Activated T-helper 1 cell treated with anti-CD3 and anti-CD28 coated beads, Interleukin-12 subunit alpha, Interleukin-12 subunit beta, Interleukin-2, Interleukin-4 antibody, amounts not matched to agents 30 ng/mL and 10 ng/mL and 1 ng/mL, durations not matched to agents 14 hours and 24 hours and 36 hours (primary cell): ENCODE measurements at regions of chrX and their contacts with region 1.

Region 1: DNA sequence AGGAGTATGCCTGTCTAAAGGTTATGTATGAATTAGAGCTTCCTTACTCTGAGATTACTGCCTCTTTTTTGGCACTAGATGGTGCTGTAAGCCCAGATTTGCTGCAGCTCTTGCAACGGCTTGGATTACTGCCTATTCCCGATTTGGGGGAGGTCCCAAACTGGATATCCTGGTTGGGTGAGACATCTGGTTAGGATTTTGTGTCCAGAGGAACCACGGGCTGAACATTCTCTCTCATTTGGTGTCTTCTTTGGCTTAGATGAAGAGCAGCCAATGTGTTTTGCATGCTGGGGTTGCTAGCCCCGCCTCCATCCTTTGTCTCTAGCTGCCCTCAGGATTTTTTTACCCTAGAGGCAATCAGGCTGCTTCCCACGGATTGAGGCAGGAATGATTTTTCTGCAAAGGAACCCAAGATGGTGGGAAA is 31.9 kb downstream of the F8A1 start:
- DNase-seq: peak; percentile 1
- H3K4me3 Mint-ChIP-seq: peak overlapping the region; percentile 68
- H3K27ac Mint-ChIP-seq: no peak overlapping the region
- H3K4me1 Mint-ChIP-seq: peaks cover 6% of the 10 kb centered on the region
- H3K27me3 Mint-ChIP-seq: peaks cover 15% of the 10 kb centered on the region

Region 2: DNA sequence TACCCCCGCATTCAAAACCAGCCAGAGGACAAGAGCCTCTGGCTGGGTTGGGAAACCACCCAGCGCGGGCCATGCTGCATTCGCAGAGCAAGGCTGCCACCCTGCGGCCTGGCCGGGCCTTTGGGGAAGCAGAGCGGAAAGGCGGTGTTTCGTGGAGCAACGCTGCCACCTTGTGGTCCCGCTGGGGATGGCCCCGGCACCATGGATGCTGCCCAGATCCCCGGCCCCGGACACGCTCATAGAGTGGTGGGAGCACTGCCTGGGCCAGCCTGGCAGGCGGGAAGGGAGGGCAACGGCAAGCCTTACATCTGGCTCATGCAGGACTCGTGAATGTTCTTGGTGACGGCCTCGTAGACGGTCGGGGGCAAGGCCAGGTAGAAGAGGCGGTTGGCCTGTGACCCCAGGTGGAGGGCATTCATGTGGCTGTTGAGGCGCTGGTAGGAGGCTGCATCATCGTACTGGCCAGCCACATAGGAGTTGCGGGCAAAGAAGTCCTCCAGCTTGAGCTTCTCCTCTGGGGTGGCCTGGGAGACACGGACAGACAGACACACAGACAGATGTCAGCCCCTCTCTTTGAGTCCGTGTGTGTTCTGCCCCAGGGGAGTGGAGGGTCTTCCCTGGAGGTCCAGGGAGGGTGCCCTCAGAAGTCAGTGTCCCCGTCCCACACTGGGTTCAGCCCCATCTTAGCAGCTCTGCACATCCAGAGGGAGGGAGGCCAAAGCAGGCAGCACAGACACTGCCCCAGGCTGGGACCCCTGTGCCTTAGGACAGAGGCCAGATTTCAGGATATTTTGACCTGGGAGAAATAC is 383.0 kb before region 1 on chrX:
- intact Hi-C with region 1: no loop called
- DNase-seq: peak; percentile 80
- H3K4me3 Mint-ChIP-seq: no peak overlapping the region
- H3K27ac Mint-ChIP-seq: no peak overlapping the region
- H3K4me1 Mint-ChIP-seq: peaks cover 6% of the 10 kb centered on the region
- H3K27me3 Mint-ChIP-seq: no peaks in the 10 kb centered on the region

Region 3: GRCh38 chrX:155056877-155057792 is 139.1 kb after region 1 on chrX:
- intact Hi-C with region 1: loop called (anchors 1 kb)
- DNase-seq: peak; percentile 22
- H3K4me3 Mint-ChIP-seq: peak overlapping the region; percentile 62
- H3K27ac Mint-ChIP-seq: no peak overlapping the region
- H3K4me1 Mint-ChIP-seq: peaks cover 35% of the 10 kb centered on the region
- H3K27me3 Mint-ChIP-seq: no peaks in the 10 kb centered on the region

Region 4: GRCh38 chrX:155070975-155071693 is 153.1 kb after region 1 on chrX and contains the starts of genes BRCC3, CMC4 and MTCP1:
- intact Hi-C with region 1: loop called (anchors 5 kb)
- DNase-seq: peak; percentile 72
- H3K4me3 Mint-ChIP-seq: peak within 1 kb of the TSS; percentile 95
- H3K27ac Mint-ChIP-seq: peak within 1 kb of the TSS; percentile 93
- H3K4me1 Mint-ChIP-seq: peaks cover 50% of the 10 kb centered on the region
- H3K27me3 Mint-ChIP-seq: no peaks in the 10 kb centered on the region
- total RNA-seq, gene BRCC3: 28.9 and 30.5 TPM in 2 replicates
- total RNA-seq, gene CMC4: 1.3 and 3.0 TPM in 2 replicates
- total RNA-seq, gene MTCP1: 9.1 and 12.7 TPM in 2 replicates

Region 5: DNA sequence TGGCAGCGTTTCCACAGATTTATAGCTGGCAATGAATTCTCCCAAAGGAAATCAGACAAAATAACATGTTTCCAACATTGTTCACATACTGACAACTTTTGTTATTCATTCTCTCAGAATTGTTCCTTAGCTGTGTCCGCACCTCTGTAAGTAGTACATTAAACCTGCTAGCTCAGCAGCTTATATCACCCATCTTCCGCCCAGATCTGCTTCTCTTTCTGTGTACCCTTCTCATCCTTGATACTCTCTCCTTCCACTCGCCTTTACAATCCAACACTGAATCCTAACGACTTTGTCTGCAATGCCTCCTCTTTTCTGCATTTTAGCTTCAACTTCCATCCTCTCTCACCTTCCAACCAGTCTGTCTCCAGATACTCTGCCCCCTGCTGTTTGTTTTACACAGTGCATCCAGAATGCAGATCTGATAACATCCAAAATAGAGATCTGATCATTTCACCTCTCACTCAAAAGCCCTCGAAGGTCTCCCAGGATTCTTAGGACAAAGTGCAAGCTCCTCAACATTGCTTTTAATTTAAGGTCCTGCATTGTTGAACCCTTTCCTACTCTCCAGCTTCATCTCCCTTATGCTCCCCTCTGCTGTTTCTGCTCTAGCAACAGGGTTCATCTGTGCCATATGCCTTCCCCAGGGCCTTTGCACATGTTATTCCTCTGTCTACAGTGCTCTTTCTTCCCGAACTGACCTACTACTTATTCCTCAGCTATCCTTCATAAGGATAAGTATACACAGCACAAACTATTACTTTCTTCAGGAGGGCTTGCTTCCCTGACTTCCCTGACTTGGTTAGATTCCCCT is 230.9 kb after region 1 on chrX:
- intact Hi-C with region 1: loop called (anchors 2 kb)
- DNase-seq: peak; percentile 11
- H3K4me3 Mint-ChIP-seq: no peak overlapping the region
- H3K27ac Mint-ChIP-seq: no peak overlapping the region
- H3K4me1 Mint-ChIP-seq: peaks cover 4% of the 10 kb centered on the region
- H3K27me3 Mint-ChIP-seq: peaks cover 5% of the 10 kb centered on the region

Region 6: DNA sequence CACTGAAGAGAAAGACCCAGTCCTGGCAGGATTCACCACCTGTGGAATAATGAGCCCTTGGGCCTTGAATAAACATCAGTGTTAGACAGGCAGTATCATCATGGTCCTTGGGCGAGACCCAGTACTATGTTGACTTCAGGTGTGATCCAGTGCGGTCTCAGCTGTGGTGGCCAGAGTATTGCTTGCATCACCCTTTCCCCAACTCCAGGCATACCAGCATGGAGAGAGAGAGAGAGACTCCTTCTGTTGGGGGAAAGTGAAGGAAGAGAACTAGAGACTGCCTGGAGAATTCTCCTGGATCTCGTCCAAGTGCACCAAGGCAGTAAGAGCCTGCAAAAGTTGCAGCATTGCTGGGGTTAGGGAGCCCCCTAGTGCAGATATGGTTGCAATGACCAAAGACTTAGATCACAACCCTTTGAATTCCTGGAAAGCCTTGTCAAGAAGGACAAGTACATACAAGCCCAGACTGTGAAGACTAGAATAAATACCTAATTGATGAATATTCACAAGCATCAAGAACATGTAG is 902.0 kb after region 1 on chrX:
- intact Hi-C with region 1: loop called (anchors 5 kb)
- DNase-seq: peak; percentile 3
- H3K4me3 Mint-ChIP-seq: no peak overlapping the region
- H3K27ac Mint-ChIP-seq: no peak overlapping the region
- H3K4me1 Mint-ChIP-seq: no peaks in the 10 kb centered on the region
- H3K27me3 Mint-ChIP-seq: peaks cover 6% of the 10 kb centered on the region